ENCODE measurements at regions of chr16 and their contacts with region 1.

Region 1: DNA sequence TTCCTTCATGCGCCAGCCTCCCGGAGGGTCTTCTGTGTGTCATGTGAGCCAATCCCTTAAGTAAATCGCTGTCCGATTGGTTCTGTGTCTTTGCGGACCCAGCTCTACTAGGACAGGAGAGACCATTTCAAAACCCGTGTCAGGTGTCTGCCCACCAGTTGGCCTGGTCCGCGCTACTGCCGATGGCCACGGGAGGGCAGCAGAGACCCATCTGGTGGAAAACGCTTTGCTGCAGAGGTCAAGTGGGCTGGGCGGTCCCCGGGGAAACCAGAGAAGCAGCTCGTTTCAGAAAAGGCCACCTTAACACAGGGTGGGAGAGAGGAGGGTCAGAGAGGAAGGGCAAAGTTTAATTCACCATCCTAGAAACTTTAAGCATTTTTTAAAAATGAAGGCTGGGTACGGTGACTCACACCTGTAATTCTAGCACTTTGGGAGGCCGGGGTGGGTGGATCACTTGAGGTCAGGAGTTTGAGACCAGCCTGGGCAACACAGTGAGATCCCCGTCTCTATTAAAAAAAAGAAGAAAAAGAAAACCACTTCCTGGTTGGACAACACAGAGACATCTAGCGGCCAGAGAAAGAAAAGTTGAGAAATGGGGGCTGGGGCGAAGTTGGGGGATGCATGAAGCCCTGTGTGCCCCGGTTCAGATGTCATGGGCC is 2.8 kb upstream of the CIBAR2 start:
- DNase-seq: peak; percentile 87 to 96 (median 95)
- ATAC-seq: peak; percentile 84 to 87
- H3K4me3 ChIP-seq: no peak overlapping the region
- H3K27ac ChIP-seq: no peak overlapping the region
- H3K4me1 ChIP-seq: no peaks in the 10 kb centered on the region
- H3K27me3 ChIP-seq: no peaks in the 10 kb centered on the region

Region 2: DNA sequence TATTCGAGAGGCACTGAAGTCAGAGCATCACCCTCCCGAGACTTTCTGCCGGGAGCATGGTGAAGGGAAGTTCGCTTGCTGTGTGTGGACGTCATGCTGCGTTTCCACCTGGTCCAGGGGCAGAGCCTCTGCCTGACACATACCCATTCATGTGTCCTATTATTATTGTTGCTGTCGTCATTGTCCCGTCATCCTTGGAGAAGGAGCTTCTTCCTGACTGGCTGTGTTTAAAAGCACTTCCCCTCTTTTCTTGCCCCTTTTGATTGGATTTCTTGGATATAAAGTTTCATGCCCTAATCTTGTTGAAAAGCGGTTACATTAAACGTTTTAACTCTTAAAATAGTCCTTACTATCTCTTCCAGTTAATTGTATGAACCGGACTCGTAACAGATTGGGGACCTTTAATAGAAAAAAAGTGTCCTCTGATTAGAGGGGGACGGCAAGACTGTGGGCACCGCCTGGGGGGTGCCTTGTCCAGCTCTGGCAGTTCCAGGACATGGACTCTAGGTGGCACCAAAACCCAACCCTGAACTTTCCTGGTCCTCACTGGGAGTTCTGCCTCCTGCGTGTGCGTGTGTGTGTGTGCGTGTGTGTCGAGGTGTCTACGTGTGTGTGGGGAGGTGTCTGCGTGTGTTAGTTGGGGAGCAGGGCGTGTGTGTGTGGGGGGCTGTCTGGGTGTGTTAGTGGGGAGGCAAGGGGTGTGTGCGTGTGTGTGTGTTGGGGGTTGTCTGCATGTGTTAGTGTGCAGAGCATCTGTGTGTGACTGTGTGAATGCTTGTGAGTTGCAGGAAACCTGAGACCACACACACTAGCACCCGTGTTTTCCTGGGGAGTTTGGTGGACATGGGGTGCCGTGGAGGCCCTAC is 130.5 kb after region 1 on chr16:
- intact Hi-C with region 1: loop called in 3 of 4 experiments (anchors 5 to 10 kb)
- DNase-seq: peak; percentile 68 to 87 (median 83)
- ATAC-seq: peak; percentile 61 to 64
- H3K4me3 ChIP-seq: no peak overlapping the region
- H3K27ac ChIP-seq: no peak overlapping the region
- H3K4me1 ChIP-seq: no peaks in the 10 kb centered on the region
- H3K27me3 ChIP-seq: no peaks in the 10 kb centered on the region

Region 3: DNA sequence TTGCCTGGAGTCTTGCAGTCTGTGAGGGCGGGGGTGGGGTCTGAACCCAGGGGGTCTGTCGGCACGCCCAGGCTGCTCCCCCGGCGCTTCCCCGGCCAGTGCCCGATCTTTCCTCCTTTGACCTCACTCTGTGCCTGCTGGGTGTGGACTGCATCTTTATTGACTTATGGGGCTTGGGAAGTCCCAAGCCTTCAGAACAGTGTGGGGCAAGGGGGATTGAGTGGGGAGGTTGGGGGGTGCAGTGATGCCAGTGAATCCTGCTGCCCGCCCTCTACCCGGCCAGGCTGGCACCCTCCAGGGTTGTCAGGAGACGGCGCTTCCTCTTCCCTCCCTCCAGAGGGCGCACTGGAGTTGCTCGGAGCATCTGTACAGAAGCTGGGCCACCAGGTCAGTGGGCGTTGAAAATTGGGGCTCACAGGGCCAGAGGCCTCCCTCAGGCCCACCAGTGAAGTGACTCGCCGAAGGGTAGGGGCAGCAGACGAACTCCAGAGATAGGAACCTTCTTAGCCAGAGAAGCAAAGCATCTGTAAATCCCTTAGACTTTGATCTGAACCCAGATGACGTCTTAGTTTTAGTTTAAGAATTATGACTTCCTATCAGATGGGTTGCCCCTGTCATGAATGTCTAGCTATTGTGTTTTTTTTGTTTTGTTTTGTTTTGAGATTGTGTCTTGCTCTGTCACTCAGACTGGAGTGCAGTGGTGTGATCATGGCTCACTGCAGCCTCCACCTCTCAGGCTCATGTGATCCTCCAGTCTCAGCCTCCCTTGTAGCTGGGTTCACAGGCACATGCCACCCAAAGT is 182.0 kb after region 1 on chr16:
- intact Hi-C with region 1: loop called in 1 of 4 experiments (anchors 10 kb)
- DNase-seq: peak in 2 of 3 donors; percentile 41 to 64
- ATAC-seq: peak; percentile 54 to 56
- H3K4me3 ChIP-seq: no peak overlapping the region
- H3K27ac ChIP-seq: no peak overlapping the region
- H3K4me1 ChIP-seq: peaks cover 4% of the 10 kb centered on the region
- H3K27me3 ChIP-seq: no peaks in the 10 kb centered on the region

Region 4: DNA sequence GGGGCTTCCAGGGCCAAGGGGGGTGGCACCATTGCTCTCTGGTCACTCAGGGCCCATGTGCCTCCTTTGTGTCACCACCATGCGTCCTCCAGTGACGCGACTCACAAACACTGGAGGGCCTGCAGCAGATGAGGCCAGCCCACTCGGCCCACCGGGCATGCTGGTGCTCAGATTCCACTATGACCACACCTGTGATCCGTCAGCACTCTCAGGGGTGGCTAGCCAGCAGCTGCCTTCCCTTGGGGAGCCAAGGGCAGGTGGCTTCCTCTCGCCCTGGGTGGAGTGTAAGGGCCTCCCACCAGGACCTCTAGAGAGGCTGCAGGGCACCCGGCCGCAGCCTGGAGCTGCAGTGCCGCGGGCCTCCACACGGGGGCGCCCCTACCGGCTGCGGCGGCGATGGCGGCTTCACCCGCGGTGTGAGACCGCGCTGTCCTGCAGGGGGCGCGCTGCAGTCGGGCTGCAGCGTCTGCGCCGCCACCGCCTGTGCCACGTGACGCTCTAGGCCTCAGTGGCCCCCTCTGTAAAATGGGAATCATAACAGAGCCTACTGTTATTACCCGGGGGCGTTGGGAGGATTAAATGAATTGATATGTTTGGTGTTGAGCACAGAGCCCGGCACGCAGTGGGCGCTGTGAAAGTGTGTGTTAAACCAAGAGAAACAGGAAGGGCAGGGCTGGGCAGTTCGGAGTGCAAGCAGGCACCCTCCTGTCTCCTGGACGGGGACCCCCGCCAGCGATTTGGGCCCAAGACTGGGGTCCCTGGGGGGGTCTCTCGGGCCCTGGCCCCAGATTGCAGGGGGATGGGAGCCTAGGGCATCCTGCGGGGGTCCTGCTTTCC is 305.7 kb after region 1 on chr16:
- intact Hi-C with region 1: loop called in 1 of 4 experiments (anchors 10 kb)
- DNase-seq: peak; percentile 53 to 86 (median 84)
- ATAC-seq: peak; percentile 22 to 58
- H3K4me3 ChIP-seq: no peak overlapping the region
- H3K27ac ChIP-seq: no peak overlapping the region
- H3K4me1 ChIP-seq: no peaks in the 10 kb centered on the region
- H3K27me3 ChIP-seq: no peaks in the 10 kb centered on the region

Measured in right cardiac atrium (tissue), 5 donors.